Activated CD4-positive, alpha-beta T cell treated with anti-CD3 and anti-CD28 coated beads for 36 hours (primary cell): ENCODE measurements at regions of chr16 and their contacts with region 1.

Region 1: DNA sequence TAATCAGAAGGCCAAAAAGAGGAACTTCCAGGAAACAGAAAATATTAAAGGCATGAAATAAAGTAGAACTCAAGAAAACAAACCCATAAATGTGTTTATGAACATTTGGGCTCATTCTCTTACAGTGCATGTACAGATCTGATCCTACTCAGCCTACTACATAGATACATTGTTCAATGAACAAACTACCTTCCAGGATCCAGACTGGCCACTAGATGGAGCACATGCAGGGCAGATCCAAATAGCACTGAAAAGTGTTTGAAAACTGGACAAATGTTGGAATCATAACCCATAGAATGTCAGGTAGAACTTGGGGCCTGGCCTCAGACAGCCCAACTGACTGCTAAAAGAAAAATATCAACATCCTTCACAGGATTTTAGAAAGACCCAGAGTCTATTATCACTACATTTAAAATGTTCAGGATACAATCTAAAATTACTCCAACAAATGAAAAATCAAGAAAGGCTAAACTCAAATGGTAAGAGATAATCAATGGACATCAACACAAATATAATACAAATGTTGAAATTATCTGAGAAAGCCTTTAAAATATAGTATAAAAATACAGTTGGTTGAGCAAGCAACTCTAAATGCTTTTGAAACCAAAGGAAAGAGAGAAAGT is 122.4 kb upstream of the NUDT7 start:
- DNase-seq: peak; percentile 50
- ATAC-seq: no peak
- H3K4me3 Mint-ChIP-seq: no peak overlapping the region
- H3K27ac Mint-ChIP-seq: no peak overlapping the region
- H3K4me1 Mint-ChIP-seq: no peaks in the 10 kb centered on the region
- H3K27me3 Mint-ChIP-seq: peaks cover 12% of the 10 kb centered on the region

Region 2: GRCh38 chr16:77531752-77532151 is 68.2 kb before region 1 on chr16:
- CTCF ChIA-PET with region 1: no interaction called
- POLR2A ChIA-PET with region 1: no interaction called
- intact Hi-C with region 1: loop called in 1 of 2 experiments (anchors 10 kb)
- DNase-seq: no peak
- ATAC-seq: no peak
- H3K4me3 Mint-ChIP-seq: no peak overlapping the region
- H3K27ac Mint-ChIP-seq: no peak overlapping the region
- H3K4me1 Mint-ChIP-seq: no peaks in the 10 kb centered on the region
- H3K27me3 Mint-ChIP-seq: peaks cover 11% of the 10 kb centered on the region

Region 3: GRCh38 chr16:77617990-77618389 is 18.1 kb after region 1 on chr16:
- CTCF ChIA-PET with region 1: no interaction called
- POLR2A ChIA-PET with region 1: no interaction called
- intact Hi-C with region 1: no loop called
- DNase-seq: no peak
- ATAC-seq: no peak
- H3K4me3 Mint-ChIP-seq: no peak overlapping the region
- H3K27ac Mint-ChIP-seq: no peak overlapping the region
- H3K4me1 Mint-ChIP-seq: no peaks in the 10 kb centered on the region
- H3K27me3 Mint-ChIP-seq: peaks cover 25% of the 10 kb centered on the region